Colonic mucosa (tissue), 4 donors: ENCODE measurements at regions of chr1 and their contacts with region 1.

Region 1: GRCh38 chr1:23809751-23810171 is 9.2 kb upstream of the GALE start:
- DNase-seq: peak; percentile 91
- H3K4me3 ChIP-seq: no peak overlapping the region
- H3K27ac ChIP-seq: no peak overlapping the region
- H3K4me1 ChIP-seq: no peaks in the 10 kb centered on the region
- H3K27me3 ChIP-seq: no peaks in the 10 kb centered on the region
- CTCF ChIP-seq: peak; percentile 70

Region 2: DNA sequence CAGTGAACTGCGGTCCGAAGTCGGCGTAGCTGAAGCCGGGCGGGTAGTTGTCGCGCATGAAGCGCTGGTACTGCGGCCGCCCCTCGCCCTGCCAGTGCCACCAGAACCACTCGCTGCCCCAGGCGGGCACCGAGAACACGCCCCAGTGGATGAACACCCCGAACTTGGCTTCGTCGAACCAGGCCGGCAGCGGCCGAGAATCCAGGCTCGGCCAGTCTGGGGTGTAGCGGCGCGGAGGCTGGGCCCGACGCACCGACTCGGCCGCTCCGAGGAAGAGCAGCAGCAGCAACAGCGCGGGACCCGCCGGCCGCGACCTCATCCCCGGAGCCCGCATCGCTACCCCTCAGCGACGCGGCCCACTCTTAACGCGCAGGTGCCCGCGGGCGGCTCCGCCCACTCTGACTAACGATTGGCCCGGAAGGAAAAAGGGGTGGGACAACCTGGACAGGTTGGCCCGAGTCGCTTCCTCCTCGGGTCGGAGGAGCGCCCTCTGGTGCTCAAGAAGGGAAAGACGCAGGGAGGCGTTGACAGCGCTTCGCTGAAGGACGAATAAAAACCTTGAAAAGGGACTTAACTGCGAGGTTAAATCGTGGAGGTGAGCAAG is 58.3 kb after region 1 on chr1 and contains the start of gene FUCA1:
- intact Hi-C with region 1: loop called (anchors 5 kb)
- DNase-seq: peak; percentile 98
- H3K4me3 ChIP-seq: peak within 1 kb of the TSS; percentile 92
- H3K27ac ChIP-seq: peak within 1 kb of the TSS; percentile 53
- H3K4me1 ChIP-seq: no peaks in the 10 kb centered on the region
- H3K27me3 ChIP-seq: no peaks in the 10 kb centered on the region
- CTCF ChIP-seq: peak; percentile 85
- total RNA-seq, gene FUCA1: 70.1 to 165 TPM

Region 3: DNA sequence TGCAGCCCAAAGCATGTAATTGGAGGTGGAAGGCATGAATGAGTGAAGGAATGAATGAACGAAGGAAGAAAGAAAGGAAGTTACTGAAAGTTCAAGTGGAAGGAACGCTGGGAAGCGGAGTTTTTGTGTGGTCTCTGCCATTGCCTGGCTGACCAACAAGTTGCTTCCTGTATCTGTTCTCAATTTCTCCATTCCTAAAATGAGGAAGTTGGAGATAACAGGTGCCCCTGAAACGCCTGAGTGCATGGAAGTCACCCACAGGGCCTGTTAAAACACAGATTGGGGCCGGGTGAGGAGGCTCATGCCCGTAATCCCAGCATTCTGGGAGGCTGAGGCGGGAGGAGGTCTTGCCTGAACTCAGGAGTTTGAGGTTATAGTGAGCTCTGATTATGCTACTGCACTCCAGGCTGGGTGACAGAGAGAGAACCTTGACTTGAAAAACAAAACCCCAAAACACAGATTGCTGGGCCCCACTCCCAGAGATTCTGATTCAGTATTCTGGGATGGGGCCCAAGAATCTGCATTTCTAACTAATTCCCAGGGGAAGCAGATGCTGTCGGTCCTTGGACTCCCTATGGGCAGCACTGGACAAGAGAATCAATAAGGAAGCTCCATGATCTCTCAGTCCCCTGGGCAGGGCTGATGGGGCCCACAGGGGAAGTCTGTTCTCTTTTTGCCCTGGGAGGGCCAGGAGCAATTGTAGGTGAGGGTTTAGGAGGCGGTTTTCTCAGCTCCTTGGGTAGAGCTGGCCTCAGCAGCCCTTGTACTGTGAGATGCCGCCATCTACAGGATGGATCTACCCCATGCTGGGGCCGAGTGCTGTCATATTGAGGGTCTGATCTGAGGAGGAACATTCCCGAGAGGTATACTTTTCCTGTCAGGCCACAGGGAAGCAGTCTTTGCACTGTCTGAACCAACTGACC is 106.7 kb after region 1 on chr1:
- intact Hi-C with region 1: loop called (anchors 5 kb)
- DNase-seq: peak; percentile 81
- H3K4me3 ChIP-seq: no peak overlapping the region
- H3K27ac ChIP-seq: no peak overlapping the region
- H3K4me1 ChIP-seq: peaks cover 5% of the 10 kb centered on the region
- H3K27me3 ChIP-seq: no peaks in the 10 kb centered on the region
- CTCF ChIP-seq: peak; percentile 58